Activated naive CD4-positive, alpha-beta T cell treated with anti-CD3 and anti-CD28 coated beads for 36 hours (primary cell): ENCODE measurements at regions of chr1 and their contacts with region 1.

Region 1: DNA sequence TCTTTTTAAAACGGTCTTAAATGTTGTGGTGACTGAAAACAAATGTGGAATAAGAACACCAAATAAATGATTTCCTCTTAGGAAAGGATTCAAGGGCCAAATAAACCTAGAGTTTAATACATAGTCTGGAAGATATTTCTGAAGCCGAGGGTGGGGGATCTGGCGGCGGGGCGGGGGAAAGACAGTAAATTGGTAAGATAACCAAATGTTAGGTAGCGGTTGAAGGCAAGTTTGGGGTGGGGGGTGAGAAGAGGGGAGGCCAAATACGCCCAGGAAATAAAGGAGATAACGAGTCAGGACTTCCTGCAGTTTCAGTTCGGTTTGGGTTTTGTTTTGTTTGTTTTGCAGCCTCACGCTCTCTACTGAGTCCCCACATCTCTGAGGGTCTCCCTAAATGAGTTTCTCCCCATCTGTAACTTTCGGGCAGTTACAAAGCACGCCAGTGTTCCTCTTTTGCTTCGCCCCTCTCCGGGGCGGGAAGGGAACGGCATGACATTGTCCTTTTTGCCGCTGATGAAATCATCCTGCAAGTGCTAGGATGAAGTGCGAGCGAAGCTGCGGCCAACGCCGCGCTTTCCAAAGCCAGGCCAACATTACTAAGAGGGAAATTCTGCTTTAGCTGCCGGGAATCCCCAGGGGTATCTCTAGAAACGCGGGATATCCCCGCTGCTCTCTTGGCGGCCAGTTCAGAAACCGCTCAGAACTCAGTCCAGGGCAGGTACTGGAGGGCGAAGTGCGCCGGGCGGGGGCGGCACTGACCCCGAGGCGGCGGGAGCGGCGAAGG is 844 bp downstream of the NIBAN1 start:
- DNase-seq: peak; percentile 84
- H3K4me3 Mint-ChIP-seq: peak overlapping the region; percentile 79
- H3K27ac Mint-ChIP-seq: peak overlapping the region; percentile 93
- H3K4me1 Mint-ChIP-seq: peaks cover 40% of the 10 kb centered on the region
- H3K27me3 Mint-ChIP-seq: peaks cover 25% of the 10 kb centered on the region

Region 2: DNA sequence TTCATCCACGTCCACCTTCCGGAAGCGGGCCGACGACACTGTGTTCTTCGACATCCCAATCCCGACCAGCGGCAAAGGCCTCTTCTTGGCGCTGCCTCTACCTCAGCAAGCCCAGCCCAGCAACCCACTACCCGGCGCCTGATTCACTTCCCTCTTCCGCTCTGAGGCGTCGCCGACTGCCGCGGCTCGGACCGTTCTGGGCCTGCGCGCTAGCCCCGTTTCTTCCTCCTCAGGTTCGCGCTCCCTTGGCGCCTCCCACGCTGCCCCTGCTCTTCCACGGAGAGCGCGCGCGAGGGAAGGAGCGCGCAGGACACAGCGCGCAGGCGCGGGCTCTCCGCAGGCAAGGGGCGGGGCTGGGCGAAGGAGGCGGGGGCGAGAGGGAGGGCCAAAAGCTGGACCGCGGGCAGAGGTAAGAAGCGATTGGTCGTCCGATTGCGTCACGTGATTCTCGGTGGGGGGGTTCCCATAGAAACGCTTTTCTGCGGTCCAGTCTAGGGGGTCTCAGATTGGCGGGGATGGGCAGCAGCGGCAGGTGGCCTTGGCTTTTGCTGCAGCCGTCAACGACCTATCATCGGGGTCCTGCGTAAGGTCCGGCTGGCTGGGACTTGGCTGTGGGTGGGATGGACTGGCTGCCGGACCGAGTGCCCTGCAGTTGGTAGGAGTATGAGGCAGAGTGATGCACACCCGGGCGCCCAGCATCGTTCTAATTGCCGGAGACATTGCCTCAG is 1337.7 kb before region 1 on chr1 and contains the start of gene ARPC5:
- CTCF ChIA-PET with region 1: no interaction called
- intact Hi-C with region 1: loop called (anchors 5 kb)
- DNase-seq: peak; percentile 97
- H3K4me3 Mint-ChIP-seq: peak within 1 kb of the TSS; percentile 98
- H3K27ac Mint-ChIP-seq: peak within 1 kb of the TSS; percentile 99
- H3K4me1 Mint-ChIP-seq: peaks cover 27% of the 10 kb centered on the region
- H3K27me3 Mint-ChIP-seq: no peaks in the 10 kb centered on the region
- total RNA-seq, gene ARPC5: 162 to 164 TPM

Region 3: GRCh38 chr1:184386312-184387068 is 587.0 kb before region 1 on chr1 and contains the start of gene C1orf21:
- CTCF ChIA-PET with region 1: no interaction called
- intact Hi-C with region 1: loop called (anchors 1 kb)
- DNase-seq: peak; percentile 80
- H3K4me3 Mint-ChIP-seq: peak within 1 kb of the TSS; percentile 78
- H3K27ac Mint-ChIP-seq: no peak within 1 kb of the TSS
- H3K4me1 Mint-ChIP-seq: peaks cover 14% of the 10 kb centered on the region
- H3K27me3 Mint-ChIP-seq: peaks cover 59% of the 10 kb centered on the region
- total RNA-seq, gene C1orf21: 1.2 to 1.4 TPM

Region 4: DNA sequence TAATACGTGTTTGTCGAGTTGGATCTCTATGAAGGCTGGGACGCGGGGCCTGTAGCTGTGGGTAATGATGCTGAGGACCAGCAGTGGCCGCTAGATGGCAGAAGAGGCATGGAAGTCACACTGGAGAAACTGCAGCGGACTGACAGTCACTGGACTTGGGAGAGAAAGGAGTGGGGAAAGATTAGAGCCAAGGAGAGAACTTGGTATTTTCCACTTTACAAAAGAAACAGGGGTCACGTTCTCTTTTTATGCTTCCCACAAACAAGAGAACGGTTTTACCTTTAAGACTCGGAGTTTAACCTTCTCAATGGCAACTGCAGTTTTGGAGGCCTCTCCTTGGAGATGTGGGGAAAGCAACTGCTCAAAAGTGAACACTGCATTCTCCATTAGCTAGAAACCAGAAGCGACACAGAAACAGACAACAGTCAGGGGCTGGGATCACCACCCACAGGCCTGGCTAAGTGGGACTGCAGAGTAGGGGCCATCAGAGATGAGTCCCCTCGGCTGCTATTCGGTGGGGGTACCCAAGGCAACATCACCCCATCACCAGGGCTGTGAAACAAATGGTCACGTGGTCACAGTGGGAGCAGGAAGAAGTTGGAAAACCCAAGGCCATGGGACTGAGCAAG is 167.7 kb before region 1 on chr1:
- CTCF ChIA-PET with region 1: interaction called, 15 read pairs
- intact Hi-C with region 1: no loop called
- DNase-seq: peak; percentile 90
- H3K4me3 Mint-ChIP-seq: no peak overlapping the region
- H3K27ac Mint-ChIP-seq: peak overlapping the region; percentile 6
- H3K4me1 Mint-ChIP-seq: peaks cover 2% of the 10 kb centered on the region
- H3K27me3 Mint-ChIP-seq: no peaks in the 10 kb centered on the region

Region 5: DNA sequence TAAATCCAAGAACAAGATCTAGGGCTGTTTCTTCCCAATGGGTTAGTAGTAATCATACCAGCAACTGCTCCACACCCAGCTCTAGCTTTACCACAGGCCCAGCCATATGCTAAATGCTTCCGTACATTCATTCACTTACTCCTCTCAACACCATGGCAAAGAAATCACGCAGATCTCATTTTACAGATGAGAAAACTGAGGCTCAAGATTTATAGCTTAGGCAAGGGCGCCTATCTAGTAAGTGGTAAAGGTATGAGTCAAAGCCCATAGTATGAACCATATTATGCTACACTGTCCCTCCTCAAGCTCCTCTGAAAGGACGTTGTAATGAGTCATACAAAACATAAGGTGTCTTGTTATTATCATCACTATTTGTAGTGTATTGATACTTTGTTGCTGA is 81.3 kb before region 1 on chr1:
- CTCF ChIA-PET with region 1: no interaction called
- intact Hi-C with region 1: loop called (anchors 1 kb)
- DNase-seq: no peak
- H3K4me3 Mint-ChIP-seq: no peak overlapping the region
- H3K27ac Mint-ChIP-seq: no peak overlapping the region
- H3K4me1 Mint-ChIP-seq: peaks cover 30% of the 10 kb centered on the region
- H3K27me3 Mint-ChIP-seq: peaks cover 3% of the 10 kb centered on the region

Region 6: GRCh38 chr1:185044981-185045813 is 71.7 kb after region 1 on chr1 and contains the start of gene RNF2:
- CTCF ChIA-PET with region 1: no interaction called
- intact Hi-C with region 1: loop called (anchors 1 kb)
- DNase-seq: peak; percentile 83
- H3K4me3 Mint-ChIP-seq: peak within 1 kb of the TSS; percentile 89
- H3K27ac Mint-ChIP-seq: peak within 1 kb of the TSS; percentile 69
- H3K4me1 Mint-ChIP-seq: peaks cover 30% of the 10 kb centered on the region
- H3K27me3 Mint-ChIP-seq: no peaks in the 10 kb centered on the region
- total RNA-seq, gene RNF2: 19.2 to 23.4 TPM

Region 7: GRCh38 chr1:186283374-186283773 is 1309.9 kb after region 1 on chr1:
- CTCF ChIA-PET with region 1: no interaction called
- intact Hi-C with region 1: loop called (anchors 5 kb)
- DNase-seq: peak; percentile 46
- H3K4me3 Mint-ChIP-seq: peak overlapping the region; percentile 48
- H3K27ac Mint-ChIP-seq: peak overlapping the region; percentile 99
- H3K4me1 Mint-ChIP-seq: peaks cover 74% of the 10 kb centered on the region
- H3K27me3 Mint-ChIP-seq: no peaks in the 10 kb centered on the region